ENCODE measurements at regions of chr12 and their contacts with region 1.

Region 1: DNA sequence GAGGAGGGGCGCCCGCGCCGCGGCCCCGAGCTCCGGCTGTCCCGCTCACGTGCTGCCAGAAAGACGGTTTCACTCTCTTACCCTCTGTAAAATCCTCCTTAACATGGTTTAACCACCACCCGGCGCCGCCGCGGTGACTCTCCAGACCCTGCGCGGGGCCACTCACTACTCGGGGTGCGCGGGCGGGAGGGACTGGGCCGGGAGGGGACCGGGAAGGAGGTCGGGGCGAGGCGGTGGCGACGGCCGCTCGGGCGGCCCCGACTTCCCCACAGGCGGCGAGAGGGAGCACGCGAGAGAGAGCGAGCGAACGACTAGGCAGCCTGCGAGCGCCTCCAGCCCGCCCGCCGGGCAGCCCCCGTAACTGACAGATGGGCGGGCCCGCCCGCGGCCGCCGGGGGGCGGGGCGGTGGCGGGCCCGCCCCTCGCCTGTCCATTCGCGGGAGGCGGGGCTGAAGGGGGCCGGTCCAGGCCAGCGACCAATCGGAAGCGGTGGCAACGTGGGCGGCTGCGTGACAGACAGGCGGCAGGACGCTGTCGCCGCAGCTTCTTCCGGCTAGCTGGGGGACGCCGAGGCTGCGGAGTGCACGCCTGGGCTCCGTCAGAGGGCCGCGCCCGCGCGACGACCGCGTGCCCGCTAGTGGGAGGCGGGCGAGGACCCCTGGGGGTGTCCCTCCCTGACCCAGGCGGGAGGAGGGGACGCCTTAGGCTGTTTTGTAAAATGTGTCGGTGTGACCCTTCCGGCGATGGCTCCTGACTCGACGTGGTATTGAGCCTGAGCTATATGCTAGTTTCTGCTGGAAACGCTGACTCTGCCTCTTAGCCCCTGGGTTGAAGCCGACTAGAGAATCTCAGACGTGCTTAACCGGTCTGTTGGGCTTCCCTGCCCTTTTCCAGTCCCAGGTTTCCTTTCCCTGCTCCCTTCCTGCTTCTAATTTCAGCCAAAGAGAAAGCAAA is at the start of gene EEA1:
- DNase-seq: peak; percentile 92 to 97 (median 94)
- H3K4me3 ChIP-seq: peak within 1 kb of the TSS; percentile 93
- H3K4me3 Mint-ChIP-seq: peak within 1 kb of the TSS; percentile 88 to 94 (median 90)
- H3K27ac ChIP-seq: peak within 1 kb of the TSS; percentile 87
- H3K27ac Mint-ChIP-seq: peak within 1 kb of the TSS; percentile 94 to 99 (median 96)
- H3K4me1 ChIP-seq: peaks cover 27% of the 10 kb centered on the region
- H3K4me1 Mint-ChIP-seq: peaks cover 30 to 42% (median 36%) of the 10 kb centered on the region in 3 donors
- H3K27me3 ChIP-seq: no peaks in the 10 kb centered on the region
- H3K27me3 Mint-ChIP-seq: no peaks in the 10 kb centered on the region
- total RNA-seq, gene EEA1: 21.5 to 23.6 TPM

Region 2: DNA sequence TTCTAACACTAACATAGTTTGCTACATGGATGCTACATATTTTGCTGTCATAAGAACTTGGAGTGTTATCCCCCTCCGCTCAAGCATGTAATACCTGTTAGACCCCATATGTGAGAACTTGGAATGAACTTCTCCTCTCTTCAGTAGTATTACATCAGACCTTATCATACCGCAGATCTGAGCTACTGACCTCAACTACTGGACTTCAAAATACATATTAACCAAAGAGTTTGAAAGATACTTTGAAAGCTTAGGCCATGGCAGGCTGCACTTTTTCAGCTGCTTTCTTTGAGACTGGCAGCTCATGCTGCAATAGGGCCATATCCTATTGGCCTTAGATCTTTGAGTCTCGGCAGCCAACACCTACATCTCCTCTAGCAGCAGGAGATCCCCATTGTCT is 74.9 kb before region 1 on chr12:
- CTCF ChIA-PET with region 1: no interaction called
- POLR2A ChIA-PET with region 1: no interaction called
- DNase-seq: no peak
- H3K4me3 ChIP-seq: no peak overlapping the region
- H3K4me3 Mint-ChIP-seq: no peak overlapping the region
- H3K27ac ChIP-seq: no peak overlapping the region
- H3K27ac Mint-ChIP-seq: no peak overlapping the region
- H3K4me1 ChIP-seq: no peaks in the 10 kb centered on the region
- H3K4me1 Mint-ChIP-seq: no peaks in the 10 kb centered on the region
- H3K27me3 ChIP-seq: no peaks in the 10 kb centered on the region
- H3K27me3 Mint-ChIP-seq: no peaks in the 10 kb centered on the region

Region 3: DNA sequence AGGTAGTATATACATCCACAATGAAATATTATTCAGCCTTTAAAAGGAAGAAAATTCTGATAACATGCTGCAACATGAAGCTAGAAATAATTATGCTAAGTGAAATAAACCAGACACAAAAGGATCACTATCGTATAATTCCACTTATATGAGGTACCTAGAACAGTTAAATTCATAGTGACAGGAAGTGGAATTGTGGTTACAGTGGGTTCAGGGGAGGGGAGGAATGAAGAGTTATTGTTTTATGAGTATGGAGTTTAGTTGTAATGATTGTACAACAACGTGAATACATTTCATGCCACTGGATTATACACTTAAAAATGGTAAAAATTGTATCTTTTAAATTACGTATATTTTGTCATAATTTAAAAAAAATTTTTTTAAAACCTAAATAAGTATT is 21.1 kb before region 1 on chr12:
- CTCF ChIA-PET with region 1: interaction called, 19 read pairs
- POLR2A ChIA-PET with region 1: no interaction called
- DNase-seq: peak in 2 of 5 donors; percentile 21 to 66
- H3K4me3 ChIP-seq: peak overlapping the region; percentile 36
- H3K4me3 Mint-ChIP-seq: peak overlapping the region in 6 of 7 donors; percentile 2 to 28 (median 6)
- H3K27ac ChIP-seq: no peak overlapping the region
- H3K27ac Mint-ChIP-seq: no peak overlapping the region
- H3K4me1 ChIP-seq: peaks cover 40% of the 10 kb centered on the region
- H3K4me1 Mint-ChIP-seq: peaks cover 35 to 60% (median 52%) of the 10 kb centered on the region in 3 donors
- H3K27me3 ChIP-seq: no peaks in the 10 kb centered on the region
- H3K27me3 Mint-ChIP-seq: no peaks in the 10 kb centered on the region

Region 4: GRCh38 chr12:92943482-92944250 is 14.4 kb after region 1 on chr12:
- CTCF ChIA-PET with region 1: interaction called, 3 read pairs
- POLR2A ChIA-PET with region 1: interaction called, 14 read pairs
- DNase-seq: no peak
- H3K4me3 ChIP-seq: no peak overlapping the region
- H3K4me3 Mint-ChIP-seq: no peak overlapping the region
- H3K27ac ChIP-seq: no peak overlapping the region
- H3K27ac Mint-ChIP-seq: no peak overlapping the region
- H3K4me1 ChIP-seq: no peaks in the 10 kb centered on the region
- H3K4me1 Mint-ChIP-seq: no peaks in the 10 kb centered on the region
- H3K27me3 ChIP-seq: no peaks in the 10 kb centered on the region
- H3K27me3 Mint-ChIP-seq: peaks cover 7 to 14% of the 10 kb centered on the region in 2 donors